Left ventricle myocardium superior (tissue), 1 donor: ENCODE measurements at regions of chr16 and their contacts with region 1.

Region 1: GRCh38 chr16:69150146-69150865 is 17.9 kb downstream of the UTP4 start:
- DNase-seq: no peak
- ATAC-seq: peak; percentile 85

Region 2: GRCh38 chr16:69083329-69083941 is 66.9 kb before region 1 on chr16:
- intact Hi-C with region 1: no loop called
- DNase-seq: no peak
- ATAC-seq: no peak

Region 3: DNA sequence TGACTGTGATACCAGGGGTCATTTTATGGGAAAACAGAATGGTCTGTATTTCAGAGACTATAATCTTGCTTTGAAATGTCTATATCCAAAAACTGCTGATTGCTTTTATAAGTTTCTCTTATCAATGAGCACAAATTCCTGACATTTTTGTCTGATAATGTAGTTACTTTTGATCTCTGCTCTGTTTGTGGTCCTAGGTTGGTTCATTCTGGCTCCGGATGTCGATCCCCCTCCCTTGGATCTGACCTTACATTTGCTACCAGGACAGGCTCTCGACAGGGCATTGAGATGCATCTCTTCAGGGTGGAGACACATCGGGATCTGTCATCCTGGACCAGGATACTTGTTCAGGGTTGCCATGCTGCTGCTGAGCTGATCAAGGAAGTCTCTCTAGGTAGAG is 133.5 kb after region 1 on chr16:
- intact Hi-C with region 1: loop called (anchors 2 kb)
- DNase-seq: no peak
- ATAC-seq: no peak